ENCODE measurements at regions of chr6 and their contacts with region 1.

Region 1: GRCh38 chr6:47733879-47734558 is 35.6 kb downstream of the ADGRF4 start:
- DNase-seq: peak; percentile 31
- H3K27ac ChIP-seq: no peak overlapping the region
- CTCF ChIP-seq: peak; percentile 47

Region 2: GRCh38 chr6:47631269-47631772 is 102.7 kb before region 1 on chr6:
- CTCF ChIA-PET with region 1: interaction called, 25 read pairs
- POLR2A ChIA-PET with region 1: no interaction called
- DNase-seq: peak; percentile 44
- H3K27ac ChIP-seq: no peak overlapping the region
- CTCF ChIP-seq: peak; percentile 69

Region 3: DNA sequence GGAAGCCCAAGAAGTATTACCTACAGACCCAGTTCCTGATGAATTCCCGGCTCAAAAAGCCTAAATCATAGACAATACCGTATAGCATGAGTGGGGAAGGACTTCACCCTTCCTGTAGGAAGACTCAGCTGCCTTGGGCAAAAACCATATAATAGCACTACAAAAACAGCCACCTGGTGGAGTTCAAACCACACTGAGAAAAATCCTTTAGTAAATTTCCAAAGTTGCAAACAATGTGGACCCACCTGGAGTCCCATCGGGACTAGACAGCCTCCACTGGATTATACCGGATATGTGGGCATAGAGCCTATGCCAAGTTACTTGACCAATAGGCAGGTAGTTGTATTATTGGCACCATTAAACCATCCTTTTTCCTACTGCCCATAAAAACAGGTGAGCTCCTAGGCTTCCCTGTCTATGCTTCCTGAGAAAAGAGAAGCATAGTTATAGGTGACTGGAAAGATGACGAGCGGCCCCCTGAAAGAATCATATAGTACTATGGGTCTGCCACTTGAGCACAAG is 87.4 kb before region 1 on chr6:
- CTCF ChIA-PET with region 1: interaction called, 10 read pairs
- POLR2A ChIA-PET with region 1: no interaction called
- DNase-seq: no peak
- H3K27ac ChIP-seq: no peak overlapping the region
- CTCF ChIP-seq: no peak

Measured in RWPE1 (cell line).